SK-N-SH (cell line): ENCODE measurements at regions of chr7 and their contacts with region 1.

Region 1: DNA sequence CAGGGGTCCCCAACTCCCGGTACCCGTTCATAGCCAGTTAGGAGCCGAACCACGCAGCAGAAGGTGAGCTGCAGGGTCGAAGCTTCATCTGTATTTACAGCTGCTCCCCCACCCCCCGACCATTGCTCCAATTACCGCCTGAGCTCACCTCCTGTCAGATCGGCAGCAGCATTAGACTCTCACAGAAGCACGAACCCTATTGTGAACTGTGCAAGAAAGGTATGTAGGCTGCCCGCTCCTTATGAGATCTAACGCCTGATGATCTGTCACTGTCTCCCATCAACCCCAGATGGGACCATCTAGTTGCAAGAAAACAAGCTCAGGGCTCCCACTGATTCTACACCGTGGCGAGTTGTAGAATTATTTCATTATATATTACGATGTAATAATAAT is 14.6 kb upstream of the AZGP1 start:
- DNase-seq: no peak
- H3K4me3 ChIP-seq: no peak overlapping the region
- H3K27ac ChIP-seq: no peak overlapping the region
- H3K4me1 ChIP-seq: no peaks in the 10 kb centered on the region; a peak in 1 of 4 replicates
- H3K27me3 ChIP-seq: peaks cover 32% of the 10 kb centered on the region
- CTCF ChIP-seq: no peak
- EP300 ChIP-seq: no peak
- RAD21 ChIP-seq: no peak

Region 2: DNA sequence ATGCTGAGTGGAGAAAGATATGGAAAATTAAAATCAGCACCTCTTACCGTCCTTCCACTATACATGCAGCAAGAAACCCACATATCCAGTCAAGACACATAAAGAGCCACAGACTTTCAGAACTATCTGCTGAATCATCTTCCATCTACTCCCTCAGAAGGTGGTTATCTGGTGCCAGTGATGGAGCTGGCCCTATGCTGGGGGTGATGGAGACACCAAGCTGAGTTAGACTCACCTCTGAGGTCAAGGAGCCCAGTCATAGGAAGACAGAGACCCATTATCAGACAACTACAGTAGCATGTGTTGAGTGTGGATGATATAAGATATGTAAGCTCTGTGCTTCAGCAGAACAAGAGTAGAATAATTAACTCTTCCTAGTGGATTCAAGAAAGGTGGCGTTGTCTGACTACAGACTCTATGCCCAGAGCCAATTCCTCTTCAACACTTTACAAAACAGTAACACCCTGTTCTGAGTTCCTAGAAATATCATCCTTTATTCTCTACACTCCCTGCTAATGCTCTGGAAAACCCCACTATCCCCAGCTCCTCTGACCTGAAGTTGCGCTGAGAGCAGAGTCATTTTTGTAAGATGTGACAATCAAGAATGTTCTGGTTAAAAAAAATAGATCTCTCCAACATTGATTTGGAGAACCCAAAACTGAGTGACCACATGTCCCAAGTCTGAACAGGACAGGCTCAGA is 325.0 kb before region 1 on chr7:
- CTCF ChIA-PET with region 1: no interaction called
- POLR2A ChIA-PET with region 1: no interaction called
- DNase-seq: no peak
- H3K4me3 ChIP-seq: no peak overlapping the region
- H3K27ac ChIP-seq: no peak overlapping the region
- H3K4me1 ChIP-seq: no peaks in the 10 kb centered on the region
- H3K27me3 ChIP-seq: no peaks in the 10 kb centered on the region
- CTCF ChIP-seq: no peak
- EP300 ChIP-seq: no peak
- RAD21 ChIP-seq: no peak

Region 3: DNA sequence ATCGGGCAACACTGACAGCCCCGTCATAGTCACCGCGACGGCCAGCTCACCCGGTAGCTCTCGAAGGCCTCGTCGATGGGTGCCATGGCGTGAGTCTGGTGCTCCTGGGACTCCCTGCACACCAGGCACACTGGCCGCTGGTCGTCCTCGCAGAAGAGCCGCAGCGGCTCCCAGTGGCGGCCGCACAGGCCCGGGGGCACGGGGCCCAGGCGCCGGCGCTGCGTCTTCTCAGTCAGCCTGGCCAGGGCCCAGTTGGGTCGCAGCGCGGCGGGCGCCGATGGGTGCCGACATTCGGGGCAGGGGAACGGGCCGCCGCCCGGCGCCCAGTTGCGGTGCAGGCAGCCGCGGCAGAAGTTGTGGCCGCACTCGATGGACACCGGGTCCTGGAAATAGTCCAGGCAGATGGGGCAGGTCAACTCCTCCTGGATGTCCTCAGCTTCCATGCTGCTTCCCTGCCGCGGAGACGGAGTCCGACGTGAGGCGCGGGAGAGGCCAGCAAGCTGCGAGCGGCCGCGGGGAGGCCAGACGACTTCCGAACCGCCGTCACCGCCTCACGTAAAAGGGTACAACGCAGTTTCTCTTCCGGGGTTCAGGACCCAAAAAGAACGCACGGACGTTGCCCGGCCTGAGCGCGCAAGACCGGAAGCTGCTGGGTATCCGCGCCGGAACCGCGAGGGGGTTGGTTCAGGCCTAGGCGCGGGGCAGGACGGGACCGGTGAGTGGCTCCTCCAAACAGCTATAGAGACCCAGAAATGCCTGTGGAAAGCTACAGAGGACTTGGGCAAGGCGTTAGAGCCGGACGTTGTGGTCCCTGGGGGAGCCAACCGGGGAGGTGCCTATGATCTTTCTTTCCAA is 71.3 kb before region 1 on chr7 and contains the start of gene TRIM4:
- CTCF ChIA-PET with region 1: interaction called, 85 read pairs
- POLR2A ChIA-PET with region 1: no interaction called
- DNase-seq: peak; percentile 87
- H3K4me3 ChIP-seq: peak within 1 kb of the TSS; percentile 59 to 64
- H3K27ac ChIP-seq: peak within 1 kb of the TSS; percentile 62 to 64
- H3K4me1 ChIP-seq: no peaks in the 10 kb centered on the region; a peak in 1 of 4 replicates
- H3K27me3 ChIP-seq: peaks cover 19% of the 10 kb centered on the region; the same call in 1 of the 2 replicates
- CTCF ChIP-seq: peak; percentile 20; the same call in 1 of the 2 replicates
- EP300 ChIP-seq: no peak
- RAD21 ChIP-seq: no peak
- polyA plus RNA-seq, gene TRIM4: 6.6 and 7.6 TPM in 2 replicates

Region 4: GRCh38 chr7:99975782-99976521 is 14.5 kb before region 1 on chr7 and contains the start of gene AZGP1:
- CTCF ChIA-PET with region 1: interaction called, 103 read pairs
- POLR2A ChIA-PET with region 1: no interaction called
- DNase-seq: no peak
- H3K4me3 ChIP-seq: no peak within 1 kb of the TSS
- H3K27ac ChIP-seq: no peak within 1 kb of the TSS
- H3K4me1 ChIP-seq: no peaks in the 10 kb centered on the region; a peak in 1 of 4 replicates
- H3K27me3 ChIP-seq: peaks cover 24% of the 10 kb centered on the region; the same call in 1 of the 2 replicates
- CTCF ChIP-seq: no peak
- EP300 ChIP-seq: no peak
- RAD21 ChIP-seq: no peak
- polyA plus RNA-seq, gene AZGP1: 0.15 TPM in 1 of 2 replicates, not detected in the other

Region 5: DNA sequence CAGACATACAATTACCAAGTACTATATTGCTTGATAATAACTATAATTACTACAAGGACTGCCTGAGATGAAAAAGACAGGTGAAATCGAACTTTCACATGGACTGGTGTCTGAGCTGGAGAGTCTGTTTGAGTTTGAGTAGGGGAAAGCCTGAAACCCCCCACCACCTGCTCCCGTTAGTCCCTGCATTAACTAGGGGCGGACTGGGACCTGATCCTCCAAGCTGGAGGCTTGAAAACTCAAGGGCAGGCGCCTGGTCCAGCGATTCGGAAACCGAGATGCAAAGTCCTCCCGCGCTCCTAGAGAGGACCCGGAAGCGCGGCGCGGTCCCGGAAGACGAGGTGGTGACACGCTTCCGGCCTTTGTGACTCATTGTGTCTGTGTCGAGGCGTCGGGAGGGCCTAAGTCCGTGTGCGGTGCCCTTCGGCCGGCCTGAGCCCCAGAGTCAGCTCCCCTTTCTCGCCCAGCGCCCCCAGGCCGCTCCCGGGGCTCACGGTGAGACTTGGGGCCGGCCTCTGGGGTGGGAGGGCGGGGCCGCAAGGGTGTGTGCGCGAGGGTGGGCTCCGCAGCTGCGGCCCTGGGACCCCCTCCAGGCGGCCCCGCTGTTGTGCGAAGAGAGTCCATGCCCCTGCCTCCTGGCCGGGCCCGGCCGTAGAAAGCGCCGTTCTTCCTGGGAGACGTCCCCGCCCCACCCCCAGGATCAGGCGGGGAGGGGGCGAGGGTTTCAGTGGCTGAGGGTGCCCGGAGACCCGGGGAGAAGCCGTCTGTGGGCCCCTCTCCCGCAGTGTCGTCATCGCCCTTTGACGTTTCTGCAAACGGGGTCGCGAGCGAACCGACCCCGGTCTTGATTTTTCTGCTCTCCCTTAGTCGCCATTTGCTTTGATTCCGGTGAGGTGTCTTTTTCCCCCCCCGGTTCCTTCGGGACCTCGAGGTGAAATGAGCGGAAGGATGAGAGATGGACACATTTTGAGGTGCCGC is 25.1 kb after region 1 on chr7 and contains the start of gene ZKSCAN1:
- CTCF ChIA-PET with region 1: interaction called, 59 read pairs
- POLR2A ChIA-PET with region 1: interaction called, 4 read pairs
- DNase-seq: peak; percentile 98
- H3K4me3 ChIP-seq: peak within 1 kb of the TSS; percentile 78 to 89
- H3K27ac ChIP-seq: peak within 1 kb of the TSS; percentile 78 to 85
- H3K4me1 ChIP-seq: peaks cover 0 to 12% of the 10 kb centered on the region in 2 experiments; a peak in 3 of 4 replicates
- H3K27me3 ChIP-seq: no peaks in the 10 kb centered on the region
- CTCF ChIP-seq: no peak
- EP300 ChIP-seq: no peak
- RAD21 ChIP-seq: no peak; the same call in 1 of the 2 replicates
- polyA plus RNA-seq, gene ZKSCAN1: 21.1 and 30.7 TPM in 2 replicates

Region 6: GRCh38 chr7:100444311-100445278 is 454.1 kb after region 1 on chr7:
- CTCF ChIA-PET with region 1: no interaction called
- POLR2A ChIA-PET with region 1: no interaction called
- DNase-seq: no peak
- H3K4me3 ChIP-seq: no peak overlapping the region
- H3K27ac ChIP-seq: peak overlapping the region in 1 of 2 experiments; percentile 50; a peak in 2 of 4 replicates
- H3K4me1 ChIP-seq: peaks cover 0 to 4% of the 10 kb centered on the region in 2 experiments; a peak in 2 of 4 replicates
- H3K27me3 ChIP-seq: no peaks in the 10 kb centered on the region
- CTCF ChIP-seq: no peak
- EP300 ChIP-seq: no peak
- RAD21 ChIP-seq: no peak